ENCODE measurements at regions of chr1 and their contacts with region 1.

Region 1: GRCh38 chr1:28877132-28877781 is 37.1 kb upstream of the EPB41 start:
- DNase-seq: peak in 1 of 2 experiments; percentile 92
- H3K4me3 ChIP-seq: no peak overlapping the region
- H3K27ac ChIP-seq: no peak overlapping the region
- H3K4me1 ChIP-seq: no peaks in the 10 kb centered on the region
- H3K27me3 ChIP-seq: no peaks in the 10 kb centered on the region
- CTCF ChIP-seq: peak; percentile 79 to 96 (median 92)
- EP300 ChIP-seq: no peak
- POLR2A ChIP-seq: no peak
- RAD21 ChIP-seq: peak; percentile 99

Region 2: GRCh38 chr1:28642847-28643635 is 234.2 kb before region 1 on chr1 and contains the start of gene TAF12:
- CTCF ChIA-PET with region 1: interaction called, 31 read pairs
- POLR2A ChIA-PET with region 1: interaction called, 3 read pairs
- DNase-seq: peak; percentile 87 to 92
- H3K4me3 ChIP-seq: peak within 1 kb of the TSS; percentile 73 to 95 (median 86)
- H3K27ac ChIP-seq: peak within 1 kb of the TSS; percentile 84
- H3K4me1 ChIP-seq: peaks cover 0 to 5% (median 4%) of the 10 kb centered on the region in 4 experiments; a peak in 3 of 7 replicates
- H3K27me3 ChIP-seq: no peaks in the 10 kb centered on the region
- CTCF ChIP-seq: peak; percentile 52 to 59 (median 59)
- EP300 ChIP-seq: no peak
- POLR2A ChIP-seq: peak; percentile 92 to 94
- RAD21 ChIP-seq: peak; percentile 58 to 64
- total RNA-seq, gene TAF12: 23.7 and 27.2 TPM in 2 replicates

Region 3: GRCh38 chr1:28775121-28775944 is 101.9 kb before region 1 on chr1:
- CTCF ChIA-PET with region 1: interaction called, 21 read pairs
- POLR2A ChIA-PET with region 1: interaction called, 4 read pairs
- DNase-seq: peak in 1 of 2 experiments; percentile 67
- H3K4me3 ChIP-seq: no peak overlapping the region
- H3K27ac ChIP-seq: no peak overlapping the region
- H3K4me1 ChIP-seq: no peaks in the 10 kb centered on the region
- H3K27me3 ChIP-seq: no peaks in the 10 kb centered on the region
- CTCF ChIP-seq: no peak
- EP300 ChIP-seq: no peak
- POLR2A ChIP-seq: no peak
- RAD21 ChIP-seq: no peak

Region 4: DNA sequence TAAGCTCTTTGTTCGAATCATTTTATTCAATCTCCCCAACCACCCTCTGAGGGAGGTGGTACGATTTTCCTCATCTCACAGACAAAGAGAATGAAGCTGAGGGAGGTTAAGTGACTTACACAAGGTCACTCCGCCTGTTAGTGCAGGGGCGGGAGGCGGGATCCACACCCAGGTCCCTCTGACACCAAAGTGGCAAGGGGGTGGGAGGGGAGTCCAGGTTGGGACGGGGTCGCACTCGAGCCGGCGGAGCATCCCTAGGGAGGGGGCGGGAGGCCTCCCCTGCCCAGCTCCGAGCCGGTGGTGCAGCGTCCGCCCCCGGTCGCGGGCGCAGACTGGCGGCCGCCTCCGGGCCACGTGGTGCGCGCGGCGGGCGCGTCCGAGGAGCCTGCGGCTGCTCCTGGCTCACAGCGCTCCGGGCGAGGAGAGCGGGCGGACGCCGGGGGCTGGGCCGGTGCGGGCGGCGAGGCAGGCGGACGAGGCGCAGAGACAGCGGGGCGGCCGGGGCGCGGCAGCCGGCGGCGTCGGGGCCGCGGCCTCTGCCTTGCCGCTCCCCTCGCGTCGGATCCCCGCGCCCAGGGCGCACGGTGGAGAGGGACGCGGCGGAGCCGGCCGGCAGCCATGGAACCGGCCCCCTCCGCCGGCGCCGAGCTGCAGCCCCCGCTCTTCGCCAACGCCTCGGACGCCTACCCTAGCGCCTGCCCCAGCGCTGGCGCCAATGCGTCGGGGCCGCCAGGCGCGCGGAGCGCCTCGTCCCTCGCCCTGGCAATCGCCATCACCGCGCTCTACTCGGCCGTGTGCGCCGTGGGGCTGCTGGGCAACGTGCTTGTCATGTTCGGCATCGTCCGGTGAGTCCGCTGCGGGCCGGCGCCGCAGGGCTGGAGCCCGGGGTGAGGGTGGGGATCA is 65.2 kb before region 1 on chr1 and contains the start of gene OPRD1:
- CTCF ChIA-PET with region 1: interaction called, 40 read pairs
- POLR2A ChIA-PET with region 1: interaction called, 4 read pairs
- DNase-seq: peak in 1 of 2 experiments; percentile 76
- H3K4me3 ChIP-seq: peak within 1 kb of the TSS; percentile 29 to 60 (median 44)
- H3K27ac ChIP-seq: no peak within 1 kb of the TSS
- H3K4me1 ChIP-seq: peaks cover 0 to 16% (median 5%) of the 10 kb centered on the region in 4 experiments; a peak in 4 of 7 replicates
- H3K27me3 ChIP-seq: peaks cover 16 to 43% (median 32%) of the 10 kb centered on the region in 4 experiments
- CTCF ChIP-seq: no peak
- EP300 ChIP-seq: no peak
- POLR2A ChIP-seq: peak in 1 of 2 experiments; percentile 43; a peak in 2 of 3 replicates
- RAD21 ChIP-seq: no peak; a peak in 1 of 4 replicates
- total RNA-seq, gene OPRD1: 3.3 and 3.7 TPM in 2 replicates

Region 5: GRCh38 chr1:28853093-28853742 is 24.0 kb before region 1 on chr1:
- CTCF ChIA-PET with region 1: interaction called, 56 read pairs
- POLR2A ChIA-PET with region 1: interaction called, 3 read pairs
- DNase-seq: no peak
- H3K4me3 ChIP-seq: no peak overlapping the region
- H3K27ac ChIP-seq: no peak overlapping the region
- H3K4me1 ChIP-seq: peaks cover 0 to 3% (median 0%) of the 10 kb centered on the region in 4 experiments; a peak in 2 of 7 replicates
- H3K27me3 ChIP-seq: no peaks in the 10 kb centered on the region
- CTCF ChIP-seq: no peak
- EP300 ChIP-seq: no peak
- POLR2A ChIP-seq: no peak
- RAD21 ChIP-seq: no peak

Region 6: DNA sequence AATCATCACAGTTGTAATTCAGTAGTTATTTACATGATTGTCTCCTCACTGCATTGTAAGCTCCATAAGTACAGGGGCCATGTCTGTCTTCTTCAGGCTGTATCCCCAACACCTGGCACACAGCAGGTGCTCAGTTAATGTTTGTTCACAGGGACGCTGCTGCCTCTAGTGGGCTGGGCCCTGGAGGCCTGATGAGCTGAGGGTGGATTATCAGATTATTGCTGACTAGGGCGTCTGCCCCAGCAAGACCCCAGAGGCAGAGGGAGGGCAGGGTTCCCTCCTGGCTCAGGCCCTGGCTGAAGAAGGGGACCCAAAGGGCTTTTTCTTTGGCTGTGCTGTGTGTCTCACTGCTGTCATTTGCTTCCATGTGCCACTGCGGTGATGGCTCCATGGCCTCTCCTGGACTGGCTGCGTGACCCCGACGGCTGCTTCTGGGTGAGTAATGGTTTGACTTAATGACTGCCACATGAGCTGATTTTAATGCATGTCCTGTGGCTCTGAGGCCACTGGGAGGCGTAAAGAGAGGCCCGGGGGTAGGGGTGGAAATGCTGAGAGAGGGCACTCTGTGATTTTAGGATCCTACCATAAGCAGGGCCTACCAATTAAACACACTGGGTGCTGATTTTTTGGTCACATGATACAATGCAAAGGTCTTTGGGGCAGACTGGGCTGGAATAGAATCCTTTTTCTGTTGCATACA is 16.3 kb after region 1 on chr1:
- CTCF ChIA-PET with region 1: interaction called, 13 read pairs
- POLR2A ChIA-PET with region 1: interaction called, 3 read pairs
- DNase-seq: peak in 1 of 2 experiments; percentile 63
- H3K4me3 ChIP-seq: no peak overlapping the region
- H3K27ac ChIP-seq: no peak overlapping the region
- H3K4me1 ChIP-seq: peaks cover 0 to 3% (median 1%) of the 10 kb centered on the region in 4 experiments; a peak in 2 of 7 replicates
- H3K27me3 ChIP-seq: peaks cover 0 to 6% (median under 1%) of the 10 kb centered on the region in 4 experiments; a peak in 3 of 7 replicates
- CTCF ChIP-seq: peak; percentile 68 to 83 (median 73)
- EP300 ChIP-seq: no peak
- POLR2A ChIP-seq: no peak
- RAD21 ChIP-seq: peak; percentile 70 to 80

Region 7: DNA sequence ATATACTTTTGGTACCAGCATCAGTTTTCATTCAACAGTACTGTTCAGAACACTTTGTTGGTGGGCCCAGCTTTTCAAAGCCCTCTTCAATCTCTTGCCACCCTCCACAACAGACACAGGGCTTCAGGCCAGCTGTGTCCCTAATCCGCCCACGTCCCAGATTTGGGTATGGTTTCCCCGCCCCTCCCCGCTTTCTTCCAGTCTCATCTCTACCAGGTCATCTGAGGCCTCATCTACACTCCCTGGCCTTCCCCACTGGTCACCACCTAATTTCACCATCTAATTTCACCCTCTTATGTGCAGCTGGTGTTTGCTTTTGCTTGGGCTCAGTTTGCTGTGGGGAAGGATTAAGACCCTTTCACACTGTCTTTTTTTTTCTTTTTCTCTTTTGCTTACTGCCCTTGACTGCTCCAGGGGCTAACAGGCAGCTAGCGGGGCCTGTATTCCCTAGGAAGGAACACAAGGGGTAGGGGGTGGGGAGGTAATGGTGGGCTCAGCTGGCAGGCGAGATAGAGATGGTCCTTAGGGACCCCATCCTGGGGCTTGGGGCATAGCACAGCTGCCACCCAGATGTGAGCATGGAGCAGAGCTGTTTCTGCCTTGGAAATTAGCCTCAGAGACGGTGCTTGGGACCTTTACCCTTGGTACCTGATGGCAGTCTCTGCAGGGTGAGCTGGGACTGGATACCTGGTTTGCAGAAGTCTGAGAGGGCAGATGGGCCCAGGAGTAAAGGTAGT is 33.3 kb after region 1 on chr1:
- CTCF ChIA-PET with region 1: no interaction called
- POLR2A ChIA-PET with region 1: no interaction called
- DNase-seq: no peak
- H3K4me3 ChIP-seq: no peak overlapping the region
- H3K27ac ChIP-seq: no peak overlapping the region
- H3K4me1 ChIP-seq: peaks cover 3 to 11% (median 5%) of the 10 kb centered on the region in 4 experiments; a peak in 4 of 7 replicates
- H3K27me3 ChIP-seq: no peaks in the 10 kb centered on the region
- CTCF ChIP-seq: no peak
- EP300 ChIP-seq: no peak
- POLR2A ChIP-seq: no peak
- RAD21 ChIP-seq: no peak

Measured in H1 (cell line).